ENCODE measurements at regions of chr15 and their contacts with region 1.

Region 1: DNA sequence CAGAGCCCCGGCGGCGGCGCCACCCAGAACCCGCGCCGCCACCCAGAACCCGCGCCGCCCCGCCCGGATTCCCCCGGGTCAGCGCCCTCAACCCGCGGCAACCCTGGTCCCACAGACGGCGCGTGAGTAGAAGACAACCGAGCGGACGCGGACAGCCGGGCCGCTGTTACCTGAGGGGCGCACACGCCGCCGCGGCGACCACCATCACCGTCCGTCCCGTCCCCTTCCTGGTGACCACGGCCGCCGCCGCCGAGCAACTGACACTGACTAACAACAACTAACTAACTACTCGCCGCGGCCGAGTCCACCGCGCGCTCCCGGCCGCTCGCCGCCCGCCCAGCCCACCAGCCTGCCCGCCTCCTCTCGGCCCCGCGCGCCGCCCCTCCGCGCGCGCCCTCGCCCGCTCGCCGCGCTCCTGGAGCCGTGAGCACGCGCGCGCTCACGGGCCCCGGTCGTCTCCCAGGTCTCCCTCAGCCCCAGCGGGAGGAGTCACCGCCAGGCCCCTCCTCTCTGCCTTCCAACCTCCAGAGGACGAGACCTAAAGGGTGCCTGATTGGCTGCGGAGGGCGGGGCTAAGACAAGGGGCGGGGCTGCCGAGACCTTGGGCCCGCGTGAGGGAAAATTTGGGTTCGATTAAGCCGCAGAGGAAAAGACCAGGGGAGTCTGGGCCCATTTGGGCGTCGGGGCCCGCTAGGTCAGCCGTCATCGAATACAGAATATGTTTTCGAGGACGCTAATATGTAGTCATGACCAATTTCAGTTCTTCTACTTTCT is at the start of gene PEAK1:
- DNase-seq: peak; percentile 98
- ATAC-seq: peak; percentile 91
- H3K4me3 ChIP-seq: peak within 1 kb of the TSS; percentile 92
- H3K27ac ChIP-seq: peak within 1 kb of the TSS; percentile 64
- H3K4me1 ChIP-seq: peaks cover 41% of the 10 kb centered on the region
- H3K27me3 ChIP-seq: no peaks in the 10 kb centered on the region
- CTCF ChIP-seq: no peak
- total RNA-seq, gene PEAK1: 13.8 and 16.7 TPM in 2 replicates

Region 2: DNA sequence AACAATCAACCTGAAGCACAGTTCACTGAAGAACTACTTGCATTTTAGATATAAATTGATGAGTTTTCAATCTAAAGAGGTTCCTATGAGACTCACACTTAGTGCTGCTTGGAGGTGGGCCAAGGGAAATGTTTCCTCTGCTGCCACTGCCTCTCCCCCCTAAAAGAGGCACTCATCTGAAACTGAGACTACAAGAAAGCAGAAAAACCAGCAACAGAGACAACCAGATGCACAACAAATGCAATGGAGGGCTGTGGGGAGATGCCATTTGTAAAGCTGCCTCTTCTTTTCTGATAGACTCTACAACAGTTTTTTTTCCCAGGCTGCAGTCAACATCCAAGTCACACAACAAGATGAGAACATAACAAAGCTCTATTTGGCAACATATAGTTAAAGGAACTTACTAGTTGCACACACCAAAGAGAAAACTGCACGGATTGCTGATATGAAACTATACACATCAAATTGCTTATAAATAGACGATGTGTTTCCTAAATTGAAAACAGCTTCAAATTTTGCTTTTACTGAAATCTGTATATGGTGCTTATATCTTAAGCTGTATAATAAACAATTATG is 360.1 kb before region 1 on chr15:
- CTCF ChIA-PET with region 1: no interaction called
- POLR2A ChIA-PET with region 1: no interaction called
- intact Hi-C with region 1: loop called (anchors 10 kb)
- DNase-seq: no peak
- ATAC-seq: no peak
- H3K4me3 ChIP-seq: no peak overlapping the region
- H3K27ac ChIP-seq: no peak overlapping the region
- H3K4me1 ChIP-seq: peaks cover 40% of the 10 kb centered on the region
- H3K27me3 ChIP-seq: no peaks in the 10 kb centered on the region
- CTCF ChIP-seq: no peak

Region 3: DNA sequence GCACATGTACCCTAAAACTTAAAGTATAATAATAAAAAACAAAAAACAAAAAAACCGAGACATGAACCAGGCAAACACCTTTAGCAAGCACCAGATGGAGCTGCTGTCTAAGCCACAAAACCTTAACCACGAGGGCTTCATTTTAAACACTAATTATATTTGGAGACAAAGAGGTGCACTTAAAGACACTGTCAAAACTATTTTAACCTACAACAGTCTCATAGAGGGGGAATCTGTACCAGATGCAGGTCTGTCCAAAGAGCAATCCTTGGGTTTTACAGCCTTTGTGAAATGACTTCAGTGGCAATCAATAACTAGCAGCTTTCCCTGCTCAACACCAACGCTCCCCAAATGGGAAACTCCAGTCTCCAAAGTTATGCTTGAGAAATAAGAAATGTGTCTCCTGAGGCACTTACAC is 233.4 kb before region 1 on chr15:
- CTCF ChIA-PET with region 1: no interaction called
- POLR2A ChIA-PET with region 1: no interaction called
- intact Hi-C with region 1: loop called (anchors 2 kb)
- DNase-seq: peak; percentile 30
- ATAC-seq: no peak
- H3K4me3 ChIP-seq: no peak overlapping the region
- H3K27ac ChIP-seq: no peak overlapping the region
- H3K4me1 ChIP-seq: peaks cover 7% of the 10 kb centered on the region
- H3K27me3 ChIP-seq: no peaks in the 10 kb centered on the region
- CTCF ChIP-seq: peak; percentile 68

Region 4: DNA sequence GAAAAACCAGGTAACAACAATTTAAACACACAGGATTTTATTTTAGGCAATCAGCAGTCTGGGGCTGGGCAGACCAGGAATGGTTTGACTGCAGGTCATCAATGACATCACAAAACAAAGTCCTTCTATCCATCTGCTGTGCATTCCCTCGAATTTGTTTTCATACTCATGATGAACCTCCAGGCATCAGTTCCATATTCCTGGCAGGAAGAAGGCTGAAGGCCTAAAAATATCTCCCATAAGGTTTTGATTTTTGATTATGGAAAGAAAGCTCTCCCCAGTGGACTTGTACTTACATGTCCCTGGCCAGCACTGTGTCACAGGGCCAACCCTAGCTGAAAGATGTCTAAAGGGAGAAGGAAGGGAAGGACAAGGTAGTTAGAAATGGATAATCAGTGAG is 107.5 kb before region 1 on chr15:
- CTCF ChIA-PET with region 1: no interaction called
- POLR2A ChIA-PET with region 1: no interaction called
- intact Hi-C with region 1: loop called (anchors 10 kb)
- DNase-seq: no peak
- ATAC-seq: no peak
- H3K4me3 ChIP-seq: no peak overlapping the region
- H3K27ac ChIP-seq: no peak overlapping the region
- H3K4me1 ChIP-seq: peaks cover 10% of the 10 kb centered on the region
- H3K27me3 ChIP-seq: no peaks in the 10 kb centered on the region
- CTCF ChIP-seq: no peak

Region 5: DNA sequence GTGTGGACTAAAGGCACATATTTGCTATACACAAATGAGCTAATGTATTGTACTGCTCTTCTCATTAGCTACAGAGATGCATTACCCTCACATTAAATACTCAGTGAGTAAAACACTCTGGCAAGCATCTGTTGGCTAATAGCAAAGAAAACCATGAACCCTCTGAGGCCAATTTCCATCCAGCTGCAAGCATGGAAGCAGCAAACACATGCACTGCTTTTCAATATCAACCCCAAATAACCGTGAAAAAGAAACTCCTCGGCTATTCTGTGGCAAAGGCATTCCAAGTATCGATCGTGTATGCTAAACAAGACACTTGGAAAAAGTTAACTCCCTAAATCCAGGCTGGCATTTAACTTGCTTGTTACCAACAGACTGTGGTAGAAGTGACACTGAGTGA is 67.1 kb before region 1 on chr15:
- CTCF ChIA-PET with region 1: no interaction called
- POLR2A ChIA-PET with region 1: no interaction called
- intact Hi-C with region 1: no loop called
- DNase-seq: no peak
- ATAC-seq: no peak
- H3K4me3 ChIP-seq: no peak overlapping the region
- H3K27ac ChIP-seq: no peak overlapping the region
- H3K4me1 ChIP-seq: peaks cover 11% of the 10 kb centered on the region
- H3K27me3 ChIP-seq: no peaks in the 10 kb centered on the region
- CTCF ChIP-seq: no peak

Region 6: DNA sequence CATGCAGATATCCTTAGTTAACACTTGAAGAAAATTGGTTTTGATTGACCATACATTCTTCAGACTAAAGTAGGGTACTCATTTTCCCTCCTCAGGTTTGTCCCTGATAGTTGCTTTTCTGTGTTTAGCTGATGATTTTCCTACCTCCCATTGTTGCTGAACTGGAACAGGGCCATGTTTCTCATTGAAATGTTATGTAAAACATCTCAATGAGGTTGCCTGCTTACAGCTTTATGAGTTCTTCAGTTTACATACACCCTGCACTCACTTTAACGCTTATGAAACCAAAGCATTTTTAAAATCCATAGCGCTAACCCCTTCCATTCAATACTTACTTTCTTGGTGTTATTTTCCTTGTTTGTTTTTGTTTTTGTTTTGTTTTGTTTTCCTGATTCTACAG is 62.5 kb after region 1 on chr15:
- CTCF ChIA-PET with region 1: no interaction called
- POLR2A ChIA-PET with region 1: no interaction called
- intact Hi-C with region 1: no loop called
- DNase-seq: peak; percentile 63
- ATAC-seq: peak; percentile 69
- H3K4me3 ChIP-seq: no peak overlapping the region
- H3K27ac ChIP-seq: no peak overlapping the region
- H3K4me1 ChIP-seq: peaks cover 17% of the 10 kb centered on the region; the same call in 1 of the 2 replicates
- H3K27me3 ChIP-seq: no peaks in the 10 kb centered on the region
- CTCF ChIP-seq: no peak

Region 7: DNA sequence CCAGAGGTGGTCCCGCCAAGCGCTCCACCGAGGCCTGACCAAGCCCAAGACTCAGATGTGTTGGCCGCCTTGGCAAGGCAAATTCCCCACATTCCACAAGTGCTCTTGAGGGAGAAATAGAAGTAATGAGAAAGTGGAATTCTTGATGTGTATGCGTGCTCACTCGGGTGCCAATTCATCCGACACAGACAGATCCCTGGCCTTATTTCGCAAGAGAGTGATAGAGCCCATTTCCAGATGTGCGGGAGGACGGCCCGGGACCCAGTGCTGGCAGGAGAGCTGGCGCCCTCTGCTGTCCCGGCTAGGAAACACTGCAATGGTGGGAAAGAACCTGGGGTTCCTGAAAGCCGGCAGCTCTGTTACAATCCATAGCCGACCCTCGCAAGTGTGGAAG is 76.7 kb after region 1 on chr15:
- CTCF ChIA-PET with region 1: interaction called, 3 read pairs
- POLR2A ChIA-PET with region 1: no interaction called
- intact Hi-C with region 1: loop called (anchors 10 kb)
- DNase-seq: peak; percentile 76
- ATAC-seq: peak; percentile 85
- H3K4me3 ChIP-seq: peak overlapping the region; percentile 32; the same call in 1 of the 2 replicates
- H3K27ac ChIP-seq: no peak overlapping the region
- H3K4me1 ChIP-seq: no peaks in the 10 kb centered on the region; the same call in 1 of the 2 replicates
- H3K27me3 ChIP-seq: no peaks in the 10 kb centered on the region
- CTCF ChIP-seq: peak; percentile 91

Measured in PC-3 (cell line).